ENCODE measurements at regions of chr6 and their contacts with region 1.

Region 1: DNA sequence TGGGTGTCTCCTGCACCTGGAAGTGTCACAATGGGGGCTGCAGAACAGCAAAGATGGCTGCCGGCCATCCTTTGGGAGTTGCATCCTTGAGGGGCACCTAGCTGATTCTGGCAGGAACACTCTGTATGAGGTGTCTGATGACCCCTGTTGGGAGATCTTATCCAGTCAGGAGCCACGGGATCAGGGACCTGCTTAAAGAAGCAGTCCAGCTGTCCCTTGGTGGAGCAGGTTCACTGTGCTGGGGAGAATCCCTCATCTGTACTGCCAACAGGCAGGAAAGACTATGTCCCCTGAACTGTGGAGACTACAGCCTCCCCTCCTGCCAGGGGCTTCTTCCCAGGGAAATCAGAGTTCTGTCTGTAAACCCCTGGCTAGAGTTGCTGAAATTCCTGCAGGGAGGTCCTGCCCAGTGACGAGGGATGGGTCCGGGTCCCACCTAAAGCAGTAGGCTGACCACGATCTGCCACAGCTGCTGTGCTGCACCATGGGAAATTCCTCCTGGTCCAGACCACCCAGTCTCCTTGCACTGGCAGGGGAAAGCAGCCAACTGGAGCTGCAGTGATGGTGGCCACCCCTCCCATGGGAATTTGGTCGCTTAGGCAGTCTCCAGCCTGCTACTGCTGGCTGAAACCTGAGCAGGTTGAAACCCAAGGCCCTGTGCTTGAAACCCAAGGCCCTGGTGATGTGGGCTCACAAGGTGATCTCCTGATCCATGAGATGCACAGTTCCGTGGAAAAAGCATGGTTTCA is 23.7 kb upstream of the MOXD1 start:
- DNase-seq: no peak
- ATAC-seq: no peak
- H3K4me3 ChIP-seq: no peak overlapping the region
- H3K4me3 Mint-ChIP-seq: no peak overlapping the region
- H3K27ac ChIP-seq: no peak overlapping the region
- H3K27ac Mint-ChIP-seq: no peak overlapping the region
- H3K4me1 ChIP-seq: no peaks in the 10 kb centered on the region
- H3K4me1 Mint-ChIP-seq: no peaks in the 10 kb centered on the region
- H3K27me3 ChIP-seq: no peaks in the 10 kb centered on the region
- H3K27me3 Mint-ChIP-seq: peaks cover 18% of the 10 kb centered on the region
- CTCF ChIP-seq: no peak

Region 2: GRCh38 chr6:130625825-130626527 is 1799.0 kb before region 1 on chr6:
- CTCF ChIA-PET with region 1: no interaction called
- POLR2A ChIA-PET with region 1: no interaction called
- intact Hi-C with region 1: no loop called
- DNase-seq: no peak
- ATAC-seq: no peak
- H3K4me3 ChIP-seq: no peak overlapping the region
- H3K4me3 Mint-ChIP-seq: no peak overlapping the region
- H3K27ac ChIP-seq: no peak overlapping the region
- H3K27ac Mint-ChIP-seq: no peak overlapping the region
- H3K4me1 ChIP-seq: no peaks in the 10 kb centered on the region
- H3K4me1 Mint-ChIP-seq: peaks cover 4% of the 10 kb centered on the region
- H3K27me3 ChIP-seq: no peaks in the 10 kb centered on the region
- H3K27me3 Mint-ChIP-seq: no peaks in the 10 kb centered on the region
- CTCF ChIP-seq: no peak

Region 3: GRCh38 chr6:132456700-132457143 is 31.7 kb after region 1 on chr6:
- CTCF ChIA-PET with region 1: no interaction called
- POLR2A ChIA-PET with region 1: no interaction called
- intact Hi-C with region 1: loop called in 1 of 2 experiments (anchors 1 kb)
- DNase-seq: no peak
- ATAC-seq: no peak
- H3K4me3 ChIP-seq: no peak overlapping the region
- H3K4me3 Mint-ChIP-seq: no peak overlapping the region
- H3K27ac ChIP-seq: no peak overlapping the region
- H3K27ac Mint-ChIP-seq: no peak overlapping the region
- H3K4me1 ChIP-seq: no peaks in the 10 kb centered on the region
- H3K4me1 Mint-ChIP-seq: no peaks in the 10 kb centered on the region
- H3K27me3 ChIP-seq: no peaks in the 10 kb centered on the region
- H3K27me3 Mint-ChIP-seq: no peaks in the 10 kb centered on the region
- CTCF ChIP-seq: no peak

Measured in CD8-positive, alpha-beta T cell (primary cell).